ENCODE measurements at regions of chr6 and their contacts with region 1.

Region 1: DNA sequence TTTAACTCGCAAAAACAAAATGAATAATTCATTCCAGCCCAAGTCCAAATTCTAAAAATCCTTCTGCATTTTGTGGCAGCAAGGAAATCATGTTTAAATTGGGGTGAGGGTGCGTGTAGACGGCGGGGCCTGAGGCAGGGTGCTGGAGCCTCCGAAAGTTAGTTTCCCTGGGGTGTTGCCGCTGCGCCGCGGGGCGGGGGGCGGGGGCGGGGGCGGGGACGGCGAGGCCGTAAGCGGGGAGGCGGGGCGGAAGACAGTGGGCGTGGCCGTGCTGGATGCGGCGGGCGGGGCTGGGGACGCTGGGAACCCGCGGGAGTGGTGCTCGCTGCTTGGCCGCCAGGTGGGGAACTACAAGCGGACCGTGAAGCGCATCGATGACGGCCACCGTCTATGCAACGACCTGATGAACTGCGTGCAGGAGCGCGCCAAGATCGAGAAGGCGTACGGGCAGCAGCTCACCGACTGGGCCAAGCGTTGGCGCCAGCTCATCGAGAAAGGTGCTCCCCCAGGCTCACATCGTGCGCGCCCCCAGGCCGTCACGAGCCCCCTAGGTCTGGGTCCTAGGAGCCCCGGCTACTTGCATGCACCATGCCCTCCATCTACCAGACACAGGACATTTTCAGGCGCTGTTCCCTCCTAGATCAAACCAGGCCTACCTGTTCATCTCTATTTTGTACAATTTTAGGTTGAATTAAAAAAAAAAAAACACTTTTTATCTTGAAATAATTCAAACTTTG is 29.0 kb downstream of the SPDEF start:
- DNase-seq: peak; percentile 75 to 93
- H3K4me3 ChIP-seq: peak overlapping the region; percentile 36; the same call in 1 of the 2 replicates
- H3K27ac ChIP-seq: no peak overlapping the region
- H3K4me1 ChIP-seq: peaks cover 12% of the 10 kb centered on the region
- H3K27me3 ChIP-seq: no peaks in the 10 kb centered on the region
- CTCF ChIP-seq: peak; percentile 56

Region 2: GRCh38 chr6:34374069-34374468 is 153.1 kb before region 1 on chr6:
- CTCF ChIA-PET with region 1: interaction called, 18 read pairs
- POLR2A ChIA-PET with region 1: no interaction called
- intact Hi-C with region 1: no loop called
- DNase-seq: no peak
- H3K4me3 ChIP-seq: no peak overlapping the region
- H3K27ac ChIP-seq: no peak overlapping the region
- H3K4me1 ChIP-seq: no peaks in the 10 kb centered on the region
- H3K27me3 ChIP-seq: no peaks in the 10 kb centered on the region
- CTCF ChIP-seq: no peak

Region 3: DNA sequence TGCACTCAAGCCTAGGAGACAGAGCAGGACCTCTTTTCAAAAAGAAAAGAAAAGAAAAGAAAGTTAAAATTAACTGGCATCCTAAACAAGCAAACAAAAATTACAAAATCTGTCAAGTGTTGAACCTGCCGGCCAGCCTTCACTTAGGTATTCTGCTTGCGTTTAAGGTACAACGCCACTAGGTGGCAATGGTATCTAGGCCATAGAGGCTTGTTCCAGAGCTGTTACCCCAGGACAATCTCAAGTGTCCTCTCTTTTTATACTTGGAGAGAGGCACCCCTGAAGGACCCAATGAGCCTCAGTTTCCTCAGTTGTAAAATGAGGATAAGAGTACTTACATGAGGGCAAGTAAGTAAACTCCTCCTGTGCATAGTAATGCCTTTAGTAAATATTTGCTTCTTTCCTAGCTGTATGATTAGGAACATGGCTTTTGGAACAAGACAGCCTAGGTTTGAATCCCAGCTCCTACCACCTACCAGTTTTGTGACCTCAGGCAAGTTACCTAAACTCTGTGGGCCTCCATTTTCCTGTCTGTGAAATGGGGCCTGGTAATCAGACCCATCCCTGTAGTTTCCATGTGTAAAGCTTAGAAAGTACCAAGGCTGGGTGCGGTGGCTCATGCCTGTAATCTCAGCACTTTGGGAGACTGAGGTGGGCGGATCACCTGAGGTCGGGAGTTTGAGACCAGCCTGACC is 67.1 kb before region 1 on chr6:
- CTCF ChIA-PET with region 1: no interaction called
- POLR2A ChIA-PET with region 1: no interaction called
- intact Hi-C with region 1: loop called (anchors 5 kb)
- DNase-seq: no peak
- H3K4me3 ChIP-seq: no peak overlapping the region
- H3K27ac ChIP-seq: no peak overlapping the region
- H3K4me1 ChIP-seq: peaks cover 15% of the 10 kb centered on the region
- H3K27me3 ChIP-seq: no peaks in the 10 kb centered on the region
- CTCF ChIP-seq: peak; percentile 86

Region 4: GRCh38 chr6:34556031-34556892 is 29.1 kb after region 1 on chr6 and contains the start of gene SPDEF:
- CTCF ChIA-PET with region 1: no interaction called
- POLR2A ChIA-PET with region 1: interaction called, 11 read pairs
- intact Hi-C with region 1: no loop called
- DNase-seq: peak; percentile 43 to 75
- H3K4me3 ChIP-seq: peak within 1 kb of the TSS; percentile 50
- H3K27ac ChIP-seq: 0 out of 2 replicates have a peak within 1 kb of the TSS, but pooled peaks have one; percentile 13
- H3K4me1 ChIP-seq: peaks cover 47% of the 10 kb centered on the region
- H3K27me3 ChIP-seq: no peaks in the 10 kb centered on the region
- CTCF ChIP-seq: no peak; the same call in 1 of the 2 replicates
- total RNA-seq, gene SPDEF: 0.85 and 1.4 TPM in 2 replicates

Region 5: GRCh38 chr6:34570066-34570833 is 43.1 kb after region 1 on chr6:
- CTCF ChIA-PET with region 1: no interaction called
- POLR2A ChIA-PET with region 1: no interaction called
- intact Hi-C with region 1: no loop called
- DNase-seq: peak in 1 of 2 experiments; percentile 16
- H3K4me3 ChIP-seq: no peak overlapping the region
- H3K27ac ChIP-seq: no peak overlapping the region
- H3K4me1 ChIP-seq: peaks cover 24% of the 10 kb centered on the region
- H3K27me3 ChIP-seq: no peaks in the 10 kb centered on the region
- CTCF ChIP-seq: no peak

Measured in PC-9 (cell line).